ENCODE measurements at regions of chr9 and their contacts with region 1.

Region 1: DNA sequence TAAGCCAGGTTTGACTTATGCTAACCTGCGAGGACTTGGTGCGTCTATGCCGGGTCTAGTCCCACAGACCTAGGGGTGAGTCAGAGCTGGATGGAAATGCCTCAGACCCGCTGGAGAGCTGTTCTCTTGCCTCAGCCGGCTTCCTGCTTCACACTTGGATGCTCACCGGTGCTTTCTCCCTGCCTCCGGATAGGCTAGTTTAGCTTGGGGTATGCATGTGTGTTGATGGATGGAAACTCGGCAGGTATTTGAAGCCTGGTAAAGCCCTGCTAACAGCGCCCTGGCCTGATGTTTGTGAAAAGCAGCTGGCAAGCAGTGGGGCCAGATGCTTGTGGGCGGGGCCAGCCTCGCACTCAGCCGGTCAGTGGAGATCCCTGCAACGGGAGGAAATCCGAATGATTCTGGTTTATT is 29.3 kb downstream of the PRRC2B start:
- DNase-seq: peak in 4 of 5 donors; percentile 54 to 70 (median 63)
- ATAC-seq: peak; percentile 55 to 78 (median 72)
- H3K4me3 ChIP-seq: peak overlapping the region in 2 of 12 donors; percentile 5 to 7
- H3K27ac ChIP-seq: peak overlapping the region in 11 of 12 donors; percentile 15 to 76 (median 56)
- H3K4me1 ChIP-seq: peaks cover 25 to 76% (median 61%) of the 10 kb centered on the region in 12 donors
- H3K27me3 ChIP-seq: no peaks in the 10 kb centered on the region
- CTCF ChIP-seq: no peak
- POLR2A ChIP-seq: no peak

Region 2: GRCh38 chr9:131349881-131350563 is 73.2 kb before region 1 on chr9:
- intact Hi-C with region 1: loop called in 1 of 10 experiments (anchors 2 kb)
- DNase-seq: peak; percentile 87 to 96 (median 92)
- ATAC-seq: peak; percentile 87 to 97 (median 96)
- H3K4me3 ChIP-seq: peak overlapping the region in 10 of 12 donors; percentile 8 to 49 (median 33)
- H3K27ac ChIP-seq: peak overlapping the region in 1 of 12 donors; percentile 3
- H3K4me1 ChIP-seq: peaks cover 0 to 16% (median 8%) of the 10 kb centered on the region in 12 donors
- H3K27me3 ChIP-seq: no peaks in the 10 kb centered on the region
- CTCF ChIP-seq: peak; percentile 77 to 95 (median 88)
- POLR2A ChIP-seq: no peak

Region 3: DNA sequence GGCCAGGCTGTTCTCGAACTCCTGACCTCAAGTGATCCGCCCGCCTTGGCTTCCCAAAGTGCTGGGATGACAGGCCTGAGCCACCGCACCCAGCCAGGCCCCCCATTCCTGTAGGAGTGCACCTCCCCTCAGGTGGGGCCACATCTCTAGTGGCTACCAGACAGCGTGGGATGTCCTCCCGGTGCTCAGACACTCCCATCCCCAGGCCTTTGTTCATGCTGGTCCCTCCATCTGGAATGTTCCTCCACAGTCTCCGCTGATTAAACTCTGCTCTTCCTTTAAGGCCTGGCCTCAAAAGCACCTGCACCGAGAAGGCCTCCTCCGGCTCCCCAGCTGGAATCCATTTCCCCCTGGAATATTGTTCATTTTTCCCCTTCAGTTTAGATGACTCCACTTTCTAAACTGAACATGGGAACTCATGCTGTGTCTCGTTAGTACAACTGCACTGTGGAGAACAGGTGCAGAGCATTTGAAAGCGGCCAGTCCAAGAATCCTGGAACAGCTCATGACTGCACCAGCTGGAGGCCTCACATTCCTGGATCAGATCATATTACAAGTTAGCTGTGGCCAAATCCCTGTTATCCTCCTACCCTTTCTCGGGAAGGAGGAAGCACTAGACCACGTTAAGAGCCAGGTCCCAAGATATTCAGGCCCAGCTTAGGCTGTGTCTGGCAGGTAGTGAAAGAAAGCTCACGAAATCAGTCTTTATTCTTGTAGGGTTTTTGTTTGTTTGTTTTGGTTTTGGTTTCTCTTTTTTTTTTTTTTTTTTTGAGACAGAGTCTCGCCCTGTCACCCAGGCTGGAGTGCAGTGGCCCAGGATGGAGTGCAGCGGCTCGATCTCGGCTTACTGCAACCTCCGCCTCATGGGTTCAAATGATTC is 40.1 kb before region 1 on chr9:
- intact Hi-C with region 1: no loop called
- DNase-seq: peak; percentile 54 to 79 (median 69)
- ATAC-seq: peak; percentile 94 to 98 (median 95)
- H3K4me3 ChIP-seq: peak overlapping the region in 2 of 12 donors; percentile 5 to 34
- H3K27ac ChIP-seq: peak overlapping the region; percentile 32 to 82 (median 68)
- H3K4me1 ChIP-seq: peaks cover 0 to 20% (median 11%) of the 10 kb centered on the region in 12 donors
- H3K27me3 ChIP-seq: no peaks in the 10 kb centered on the region
- CTCF ChIP-seq: no peak
- POLR2A ChIP-seq: no peak

Region 4: DNA sequence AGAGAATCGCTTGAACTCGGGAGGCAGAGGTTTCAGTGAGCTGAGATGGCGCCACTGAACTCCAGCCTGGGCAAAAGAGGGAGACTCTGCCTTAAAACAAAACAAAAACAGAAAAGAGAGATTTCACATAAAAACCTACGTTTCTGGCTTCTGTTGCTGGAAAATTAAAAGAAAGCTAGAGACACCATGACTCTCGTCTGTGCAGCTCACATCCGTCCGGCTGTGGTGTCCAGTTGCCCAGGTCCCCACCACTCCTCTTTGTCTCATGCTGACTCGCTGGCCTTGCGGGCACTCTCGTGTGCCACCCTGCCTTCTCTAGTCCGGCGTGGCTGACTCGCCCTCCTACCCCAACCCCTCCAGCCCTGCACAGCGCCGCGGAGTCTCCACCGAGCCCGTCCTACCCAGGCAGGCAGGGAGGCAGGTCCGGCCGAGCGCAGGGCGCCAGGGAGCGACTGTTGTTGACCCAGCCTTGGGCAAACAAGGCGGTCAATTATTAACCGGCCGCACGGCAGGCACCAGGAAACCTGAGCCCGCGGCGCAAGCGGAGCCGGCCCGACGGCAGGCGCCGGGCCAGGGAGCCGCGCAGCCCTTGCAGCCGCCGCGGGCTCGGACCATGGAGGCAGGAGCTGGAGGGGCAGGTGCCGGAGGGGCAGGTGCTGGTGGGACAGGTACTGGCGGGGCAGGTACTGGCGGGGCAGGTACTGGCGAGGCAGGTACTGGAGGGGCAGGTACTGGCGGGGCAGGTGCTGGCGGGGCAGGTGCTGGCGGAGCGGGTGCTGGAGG is 122.0 kb after region 1 on chr9 and contains the start of gene PRRT1B:
- intact Hi-C with region 1: no loop called
- DNase-seq: peak in 1 of 5 donors; percentile 65
- ATAC-seq: peak in 2 of 4 donors; percentile 12 to 44
- H3K4me3 ChIP-seq: peak within 1 kb of the TSS in 4 of 12 donors; percentile 20 to 41 (median 32)
- H3K27ac ChIP-seq: no peak within 1 kb of the TSS
- H3K4me1 ChIP-seq: peaks cover 0 to 20% (median 8%) of the 10 kb centered on the region in 12 donors
- H3K27me3 ChIP-seq: peaks cover 11 to 52% (median 39%) of the 10 kb centered on the region in 9 donors
- CTCF ChIP-seq: no peak
- POLR2A ChIP-seq: no peak
- total RNA-seq, gene PRRT1B: not detected